ENCODE measurements at regions of chr18 and their contacts with region 1.

Region 1: GRCh38 chr18:839224-840022 is 27.4 kb upstream of the YES1 start:
- DNase-seq: peak; percentile 96
- H3K4me3 Mint-ChIP-seq: no peak overlapping the region
- H3K27ac Mint-ChIP-seq: no peak overlapping the region
- H3K4me1 Mint-ChIP-seq: peaks cover 5% of the 10 kb centered on the region
- H3K27me3 Mint-ChIP-seq: peaks cover 13% of the 10 kb centered on the region

Region 2: GRCh38 chr18:623761-624620 is 215.4 kb before region 1 on chr18:
- intact Hi-C with region 1: loop called (anchors 2 kb)
- DNase-seq: peak; percentile 89
- H3K4me3 Mint-ChIP-seq: no peak overlapping the region
- H3K27ac Mint-ChIP-seq: no peak overlapping the region
- H3K4me1 Mint-ChIP-seq: peaks cover 2% of the 10 kb centered on the region
- H3K27me3 Mint-ChIP-seq: peaks cover 41% of the 10 kb centered on the region

Region 3: DNA sequence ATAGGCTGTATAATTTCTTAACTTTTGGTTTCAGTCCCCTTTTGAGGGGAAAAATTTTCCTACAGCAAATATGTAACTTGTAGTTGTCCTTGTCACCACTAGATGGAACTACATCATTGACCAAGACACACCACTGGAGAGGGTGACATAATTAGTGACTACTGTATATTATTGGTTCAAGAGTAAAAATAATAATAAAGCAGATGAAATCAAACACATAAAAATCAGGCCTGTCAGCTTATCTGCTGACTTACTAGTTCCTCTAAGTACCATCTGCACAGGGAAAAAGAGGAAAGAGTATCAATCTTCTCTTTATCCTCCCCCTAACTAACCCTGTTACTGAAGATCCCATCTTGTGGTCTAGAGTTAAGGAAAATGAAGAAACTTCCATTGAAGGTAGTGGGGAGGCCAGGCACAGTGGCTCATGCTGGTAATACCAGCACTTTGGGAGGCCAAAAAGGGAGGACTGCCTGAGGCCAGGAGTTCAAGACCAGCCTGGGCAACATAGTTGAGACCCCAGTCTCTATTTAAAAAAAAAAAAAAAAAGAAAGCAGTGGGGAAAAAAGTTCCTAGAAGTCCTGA is 97.4 kb before region 1 on chr18:
- intact Hi-C with region 1: loop called (anchors 1 kb)
- DNase-seq: peak; percentile 67
- H3K4me3 Mint-ChIP-seq: no peak overlapping the region
- H3K27ac Mint-ChIP-seq: no peak overlapping the region
- H3K4me1 Mint-ChIP-seq: peaks cover 1% of the 10 kb centered on the region
- H3K27me3 Mint-ChIP-seq: no peaks in the 10 kb centered on the region